HCT116 (cell line): ENCODE measurements at regions of chr17 and their contacts with region 1.

Region 1: GRCh38 chr17:82297714-82298537 is 19.5 kb downstream of the CD7 start:
- DNase-seq: no peak
- ATAC-seq: peak; percentile 64
- H3K4me3 ChIP-seq: peak overlapping the region; percentile 52 to 62
- H3K27ac ChIP-seq: peak overlapping the region; percentile 89
- H3K4me1 ChIP-seq: peaks cover 35 to 64% of the 10 kb centered on the region in 2 experiments
- H3K27me3 ChIP-seq: no peaks in the 10 kb centered on the region
- CTCF ChIP-seq: no peak
- POLR2A ChIP-seq: no peak
- RAD21 ChIP-seq: no peak

Region 2: DNA sequence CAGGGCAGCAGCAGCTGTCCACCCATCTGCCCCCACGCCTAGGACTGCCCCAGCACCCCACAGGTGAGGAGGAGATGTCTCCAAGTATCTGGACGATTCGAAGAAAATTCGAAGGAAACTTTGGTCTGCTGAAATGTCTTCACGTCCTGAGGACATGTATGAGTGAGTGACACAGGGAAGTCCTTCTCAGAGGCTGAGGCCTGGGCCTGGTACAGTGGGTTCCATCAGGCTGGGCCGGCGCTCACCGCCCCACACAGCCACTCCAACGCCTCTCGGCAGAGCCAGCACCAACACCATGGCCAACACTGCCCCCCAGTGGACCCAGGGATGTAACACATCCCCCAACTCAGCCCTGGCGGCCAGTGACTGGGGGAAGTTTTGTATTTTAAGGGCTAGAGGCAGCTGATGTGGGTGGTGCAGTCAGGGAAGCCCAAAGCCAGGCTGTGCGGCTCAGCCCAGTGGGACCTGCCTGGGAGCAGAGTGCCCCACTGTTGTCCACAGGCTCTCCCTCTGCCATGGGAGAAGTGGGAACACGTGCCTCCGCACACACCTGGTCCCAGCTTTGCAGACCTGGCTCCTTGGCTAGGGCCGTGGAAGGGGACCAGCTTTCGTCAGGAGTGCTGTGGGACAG is 144.1 kb before region 1 on chr17:
- CTCF ChIA-PET with region 1: no interaction called
- POLR2A ChIA-PET with region 1: no interaction called
- RAD21 ChIA-PET with region 1: no interaction called
- intact Hi-C with region 1: no loop called
- DNase-seq: peak; percentile 54
- ATAC-seq: peak; percentile 96
- H3K4me3 ChIP-seq: no peak overlapping the region
- H3K27ac ChIP-seq: no peak overlapping the region
- H3K4me1 ChIP-seq: no peaks in the 10 kb centered on the region; a peak in 1 of 4 replicates
- H3K27me3 ChIP-seq: no peaks in the 10 kb centered on the region
- CTCF ChIP-seq: peak; percentile 95 to 99 (median 98)
- POLR2A ChIP-seq: no peak
- RAD21 ChIP-seq: peak; percentile 97

Region 3: DNA sequence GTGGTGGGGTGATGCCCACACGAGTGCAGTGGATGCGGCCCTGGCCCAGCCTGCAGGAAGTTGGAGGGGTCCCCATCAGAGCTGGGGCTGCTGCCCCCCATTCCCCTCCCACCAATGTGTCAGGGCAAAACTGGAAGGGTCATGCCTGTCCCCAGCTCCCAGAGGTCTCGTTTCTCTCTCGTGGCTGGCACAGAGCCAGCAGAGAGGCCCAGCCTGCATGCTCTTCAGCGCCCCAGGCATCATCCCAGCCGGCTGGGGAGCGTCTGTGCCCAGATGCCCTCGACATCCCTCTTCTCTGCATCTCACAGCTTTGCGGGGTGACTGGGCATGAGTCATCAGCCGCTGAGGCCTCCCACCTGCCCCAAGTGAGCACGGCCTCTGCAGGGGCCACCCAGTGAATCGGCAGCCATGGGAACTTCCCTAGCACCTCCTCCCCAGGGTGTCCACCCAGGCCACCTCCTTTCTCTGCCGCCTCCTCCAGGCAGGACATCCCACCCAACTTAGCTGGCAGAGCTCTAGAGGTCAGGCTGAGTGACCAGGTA is 14.6 kb before region 1 on chr17:
- CTCF ChIA-PET with region 1: interaction called, 3 read pairs
- POLR2A ChIA-PET with region 1: interaction called, 35 read pairs
- RAD21 ChIA-PET with region 1: no interaction called
- intact Hi-C with region 1: no loop called
- DNase-seq: no peak
- ATAC-seq: peak; percentile 10; the same call in 1 of the 2 replicates
- H3K4me3 ChIP-seq: no peak overlapping the region; a peak in 1 of 4 replicates
- H3K27ac ChIP-seq: peak overlapping the region; percentile 59; the same call in 1 of the 2 replicates
- H3K4me1 ChIP-seq: peaks cover 47 to 53% of the 10 kb centered on the region in 2 experiments
- H3K27me3 ChIP-seq: no peaks in the 10 kb centered on the region
- CTCF ChIP-seq: no peak
- POLR2A ChIP-seq: no peak
- RAD21 ChIP-seq: no peak

Region 4: DNA sequence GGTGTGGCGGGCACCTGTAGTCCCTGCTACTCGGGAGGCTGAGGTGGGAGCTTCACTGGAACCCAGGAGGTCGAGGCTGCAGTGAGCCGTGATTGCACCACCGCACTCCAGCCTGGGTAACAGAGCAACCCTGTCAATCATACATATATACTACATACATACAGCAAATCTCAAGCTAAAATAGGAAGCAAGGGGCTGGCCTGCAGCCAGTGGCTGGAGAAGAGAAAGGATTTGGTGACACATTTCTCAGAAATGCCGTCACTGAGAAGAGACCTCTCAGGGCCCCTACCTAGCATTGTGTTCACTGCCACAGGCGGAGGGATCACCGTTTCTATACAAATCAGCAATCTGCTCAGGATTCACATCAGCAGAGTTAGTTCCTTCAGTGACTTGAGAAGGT is 177.5 kb after region 1 on chr17:
- CTCF ChIA-PET with region 1: no interaction called
- POLR2A ChIA-PET with region 1: no interaction called
- RAD21 ChIA-PET with region 1: no interaction called
- intact Hi-C with region 1: no loop called
- DNase-seq: no peak
- ATAC-seq: no peak
- H3K4me3 ChIP-seq: no peak overlapping the region
- H3K27ac ChIP-seq: no peak overlapping the region
- H3K4me1 ChIP-seq: no peaks in the 10 kb centered on the region
- H3K27me3 ChIP-seq: no peaks in the 10 kb centered on the region
- CTCF ChIP-seq: no peak
- POLR2A ChIP-seq: no peak
- RAD21 ChIP-seq: no peak